ENCODE measurements at regions of chr6 and their contacts with region 1.

Region 1: DNA sequence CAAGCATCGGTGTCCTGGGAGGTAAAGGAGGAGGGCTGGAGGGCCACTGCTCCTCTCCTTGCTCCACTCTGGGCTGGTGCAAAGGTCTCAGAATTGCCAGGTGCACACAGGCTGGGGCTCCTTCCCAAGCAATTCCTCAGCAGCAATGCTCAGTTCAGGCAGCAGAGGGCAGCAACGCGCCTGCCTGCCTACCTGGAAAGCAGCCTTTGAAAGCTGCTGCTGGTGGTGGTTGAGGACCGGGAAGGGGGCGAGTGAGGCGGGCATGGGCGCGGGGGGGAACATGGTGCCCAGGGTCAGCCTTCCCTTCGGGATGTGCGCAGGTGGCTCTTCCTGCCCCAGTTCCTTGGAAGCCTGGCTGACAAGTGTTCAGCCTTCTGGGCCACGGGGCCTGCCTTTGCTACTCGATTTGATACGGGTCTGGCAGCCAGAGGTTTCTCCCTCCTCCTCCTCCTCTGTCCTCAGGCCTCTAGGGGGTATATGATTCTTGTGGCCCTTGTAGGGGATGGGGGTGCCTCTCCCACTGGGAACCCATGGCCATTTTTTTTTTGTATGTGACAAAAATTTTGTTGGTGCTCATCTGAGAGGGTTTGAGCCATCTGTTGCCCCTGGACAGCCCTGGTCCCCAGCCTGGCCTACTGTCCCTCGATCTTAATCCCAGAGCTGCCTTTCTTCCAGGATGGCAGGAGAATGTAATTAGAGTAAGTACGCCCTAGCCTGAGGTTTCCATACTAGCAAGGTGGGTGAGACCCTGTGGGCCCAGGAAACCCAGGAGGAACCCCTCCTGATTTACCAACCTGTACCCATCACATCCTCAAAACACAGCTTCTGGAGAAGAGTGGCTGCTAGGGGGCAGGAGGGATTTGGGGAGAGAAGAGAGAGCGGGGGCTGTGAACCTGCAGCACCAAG is 20.1 kb downstream of the MRPS18A start:
- DNase-seq: peak; percentile 75 to 89 (median 81)
- ATAC-seq: peak; percentile 39 to 71 (median 52)
- H3K4me3 ChIP-seq: peak overlapping the region in 2 of 12 donors; percentile 13 to 24
- H3K27ac ChIP-seq: peak overlapping the region; percentile 11 to 87 (median 69)
- H3K4me1 ChIP-seq: peaks cover 11 to 47% (median 37%) of the 10 kb centered on the region in 12 donors
- H3K27me3 ChIP-seq: no peaks in the 10 kb centered on the region
- CTCF ChIP-seq: peak; percentile 89 to 98 (median 94)
- POLR2A ChIP-seq: no peak

Region 2: GRCh38 chr6:43593938-43594337 is 73.6 kb before region 1 on chr6:
- intact Hi-C with region 1: no loop called
- DNase-seq: no peak
- ATAC-seq: no peak
- H3K4me3 ChIP-seq: no peak overlapping the region
- H3K27ac ChIP-seq: no peak overlapping the region
- H3K4me1 ChIP-seq: no peaks in the 10 kb centered on the region
- H3K27me3 ChIP-seq: no peaks in the 10 kb centered on the region
- CTCF ChIP-seq: no peak
- POLR2A ChIP-seq: no peak

Region 3: DNA sequence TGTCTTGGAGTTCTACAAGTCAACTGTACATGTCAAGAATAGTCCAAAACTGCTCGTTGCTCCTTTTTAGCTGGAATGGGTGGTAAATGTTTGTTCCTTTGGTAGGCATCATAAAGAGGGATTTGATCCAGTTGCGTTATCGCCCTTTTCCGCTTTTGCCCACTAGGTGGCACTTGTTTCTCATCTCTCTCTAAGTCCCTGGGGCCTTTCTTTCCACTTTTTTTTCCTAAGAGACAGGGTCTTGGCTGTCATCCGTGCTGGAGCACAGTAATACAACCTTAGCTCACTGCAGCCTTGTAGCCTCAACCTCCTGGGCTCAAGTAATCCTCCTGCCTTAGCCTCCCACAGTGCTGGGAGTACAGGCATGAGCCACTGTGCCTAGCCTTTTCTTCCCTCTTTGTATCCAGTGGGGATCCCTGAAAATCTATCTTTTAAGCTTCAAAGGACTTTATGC is 59.2 kb before region 1 on chr6:
- intact Hi-C with region 1: loop called in 2 of 10 experiments (anchors 2 to 5 kb)
- DNase-seq: peak in 3 of 5 donors; percentile 40 to 66 (median 63)
- ATAC-seq: peak; percentile 51 to 56 (median 54)
- H3K4me3 ChIP-seq: no peak overlapping the region
- H3K27ac ChIP-seq: no peak overlapping the region
- H3K4me1 ChIP-seq: peaks cover 0 to 13% (median 0%) of the 10 kb centered on the region in 12 donors
- H3K27me3 ChIP-seq: no peaks in the 10 kb centered on the region
- CTCF ChIP-seq: peak; percentile 66 to 90 (median 78)
- POLR2A ChIP-seq: no peak

Region 4: DNA sequence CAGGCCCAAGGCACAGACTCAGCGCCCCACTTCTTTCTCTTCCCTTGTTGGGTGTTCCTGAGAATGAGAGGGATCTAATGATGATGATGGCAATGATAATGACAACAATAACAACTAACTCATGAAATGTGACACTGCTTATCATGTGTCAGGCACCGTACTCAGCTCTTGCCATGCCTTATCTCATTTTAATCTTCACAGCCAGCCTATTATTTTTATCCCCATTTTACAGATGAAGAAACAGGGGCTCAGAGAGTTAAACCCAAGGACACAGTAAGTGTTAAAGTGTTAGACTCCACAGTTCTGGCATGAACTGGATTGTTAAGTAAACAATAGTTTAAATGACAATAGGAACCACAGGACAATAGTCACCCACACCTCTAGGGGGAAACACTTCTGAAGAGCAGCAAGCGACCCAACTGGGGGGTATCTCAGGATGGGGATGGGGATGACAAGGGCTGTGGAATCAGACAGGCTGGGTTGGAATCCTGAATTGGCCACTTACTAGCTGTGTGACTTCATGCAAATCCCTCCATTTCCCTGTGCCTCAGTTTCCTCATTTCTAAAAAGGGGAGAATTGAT is 10.2 kb before region 1 on chr6:
- intact Hi-C with region 1: no loop called
- DNase-seq: no peak
- ATAC-seq: no peak
- H3K4me3 ChIP-seq: no peak overlapping the region
- H3K27ac ChIP-seq: no peak overlapping the region
- H3K4me1 ChIP-seq: no peaks in the 10 kb centered on the region
- H3K27me3 ChIP-seq: no peaks in the 10 kb centered on the region
- CTCF ChIP-seq: peak in 1 of 12 donors; percentile 6
- POLR2A ChIP-seq: no peak

Region 5: DNA sequence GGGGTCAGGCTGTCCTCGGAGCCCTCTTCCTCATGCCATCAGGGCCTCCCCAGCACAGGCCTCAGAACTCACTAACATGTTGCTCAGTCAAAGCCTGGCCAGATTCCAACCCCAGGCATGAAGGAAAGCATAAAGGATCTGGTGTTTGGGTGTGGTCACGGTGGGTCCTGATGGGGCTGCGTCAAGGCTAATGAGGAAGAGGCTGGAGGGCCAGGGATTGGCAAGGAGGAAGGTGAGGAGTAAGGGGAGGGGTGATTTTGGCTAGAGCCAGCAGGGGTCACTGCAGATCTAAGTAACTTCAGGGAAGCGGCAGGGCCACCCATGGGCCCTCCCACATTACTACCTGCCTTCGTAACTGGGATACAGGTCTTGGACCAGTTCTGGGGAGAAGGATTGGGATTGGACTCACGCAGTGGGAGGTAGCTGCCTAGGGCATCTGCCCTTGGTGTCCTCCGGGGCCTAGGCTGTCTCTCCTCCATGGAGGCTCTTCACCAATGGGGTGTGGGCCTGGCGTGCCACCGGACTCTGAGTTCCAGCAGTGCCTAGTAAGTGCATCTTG is 56.3 kb after region 1 on chr6:
- intact Hi-C with region 1: loop called in 4 of 10 experiments (anchors 5 to 10 kb)
- DNase-seq: peak; percentile 60 to 72 (median 66)
- ATAC-seq: peak; percentile 66 to 88 (median 81)
- H3K4me3 ChIP-seq: no peak overlapping the region
- H3K27ac ChIP-seq: no peak overlapping the region
- H3K4me1 ChIP-seq: peaks cover 3 to 21% (median 6%) of the 10 kb centered on the region in 12 donors
- H3K27me3 ChIP-seq: no peaks in the 10 kb centered on the region
- CTCF ChIP-seq: peak; percentile 46 to 72 (median 58)
- POLR2A ChIP-seq: no peak

Region 6: GRCh38 chr6:43758617-43759050 is 91.1 kb after region 1 on chr6:
- intact Hi-C with region 1: loop called in 6 of 10 experiments (anchors 1 to 5 kb)
- DNase-seq: no peak
- ATAC-seq: peak in 3 of 4 donors; percentile 58 to 70 (median 70)
- H3K4me3 ChIP-seq: no peak overlapping the region
- H3K27ac ChIP-seq: no peak overlapping the region
- H3K4me1 ChIP-seq: peaks cover 0 to 6% (median 0%) of the 10 kb centered on the region in 12 donors
- H3K27me3 ChIP-seq: no peaks in the 10 kb centered on the region
- CTCF ChIP-seq: peak; percentile 57 to 83 (median 66)
- POLR2A ChIP-seq: no peak

Region 7: GRCh38 chr6:43838276-43839036 is 171.0 kb after region 1 on chr6:
- intact Hi-C with region 1: loop called in 3 of 10 experiments (anchors 5 to 10 kb)
- DNase-seq: peak; percentile 17 to 76 (median 61)
- ATAC-seq: peak; percentile 39 to 87 (median 80)
- H3K4me3 ChIP-seq: no peak overlapping the region
- H3K27ac ChIP-seq: peak overlapping the region in 5 of 12 donors; percentile 14 to 63 (median 36)
- H3K4me1 ChIP-seq: peaks cover 0 to 19% (median 2%) of the 10 kb centered on the region in 12 donors
- H3K27me3 ChIP-seq: no peaks in the 10 kb centered on the region
- CTCF ChIP-seq: peak in 11 of 12 donors; percentile 36 to 65 (median 47)
- POLR2A ChIP-seq: no peak

Region 8: DNA sequence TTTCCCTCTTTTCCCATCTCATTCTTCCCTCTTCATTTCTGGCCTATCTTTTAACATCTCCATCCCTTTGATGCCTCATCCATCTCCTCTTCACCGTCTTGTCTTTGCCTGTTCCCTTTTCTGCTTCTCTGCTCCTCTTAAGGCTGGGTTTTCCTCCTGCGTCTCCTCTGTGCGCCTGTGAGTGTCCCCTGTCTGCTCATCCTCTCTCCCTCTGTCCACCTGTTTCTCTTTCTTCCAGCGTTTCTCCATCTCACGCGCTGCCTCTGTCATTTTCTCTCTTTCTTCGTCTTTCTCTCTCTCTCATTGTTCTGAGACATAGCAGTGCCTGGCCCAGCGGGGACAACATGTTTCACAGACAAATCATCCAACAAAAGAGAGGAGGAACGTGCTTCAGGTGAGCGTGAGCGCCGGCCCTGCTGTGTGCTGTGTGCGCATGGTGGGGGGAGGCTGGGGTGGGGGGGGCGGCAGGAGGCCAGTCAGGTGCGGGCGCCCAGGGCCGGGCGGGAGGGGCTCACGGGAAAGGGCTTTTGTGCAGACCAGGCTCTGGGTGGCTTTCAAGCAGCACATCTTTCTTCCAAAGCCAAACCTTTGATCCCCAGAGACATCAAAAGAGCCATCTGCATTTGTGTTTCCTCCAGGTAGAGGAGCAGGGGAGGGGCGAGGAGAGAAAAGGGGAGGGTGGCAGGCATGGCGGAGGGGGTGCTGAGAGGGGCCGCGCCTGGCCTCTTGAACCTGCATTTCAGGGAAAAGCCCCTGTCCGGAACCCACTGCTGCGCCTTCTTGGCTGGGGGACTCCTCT is 223.8 kb after region 1 on chr6:
- intact Hi-C with region 1: no loop called
- DNase-seq: no peak
- ATAC-seq: no peak
- H3K4me3 ChIP-seq: no peak overlapping the region
- H3K27ac ChIP-seq: no peak overlapping the region
- H3K4me1 ChIP-seq: peaks cover 0 to 11% (median 4%) of the 10 kb centered on the region in 12 donors
- H3K27me3 ChIP-seq: peaks cover 0 to 15% (median 0%) of the 10 kb centered on the region in 9 donors
- CTCF ChIP-seq: no peak
- POLR2A ChIP-seq: no peak